ENCODE measurements at regions of chr3 and their contacts with region 1.

Region 1: DNA sequence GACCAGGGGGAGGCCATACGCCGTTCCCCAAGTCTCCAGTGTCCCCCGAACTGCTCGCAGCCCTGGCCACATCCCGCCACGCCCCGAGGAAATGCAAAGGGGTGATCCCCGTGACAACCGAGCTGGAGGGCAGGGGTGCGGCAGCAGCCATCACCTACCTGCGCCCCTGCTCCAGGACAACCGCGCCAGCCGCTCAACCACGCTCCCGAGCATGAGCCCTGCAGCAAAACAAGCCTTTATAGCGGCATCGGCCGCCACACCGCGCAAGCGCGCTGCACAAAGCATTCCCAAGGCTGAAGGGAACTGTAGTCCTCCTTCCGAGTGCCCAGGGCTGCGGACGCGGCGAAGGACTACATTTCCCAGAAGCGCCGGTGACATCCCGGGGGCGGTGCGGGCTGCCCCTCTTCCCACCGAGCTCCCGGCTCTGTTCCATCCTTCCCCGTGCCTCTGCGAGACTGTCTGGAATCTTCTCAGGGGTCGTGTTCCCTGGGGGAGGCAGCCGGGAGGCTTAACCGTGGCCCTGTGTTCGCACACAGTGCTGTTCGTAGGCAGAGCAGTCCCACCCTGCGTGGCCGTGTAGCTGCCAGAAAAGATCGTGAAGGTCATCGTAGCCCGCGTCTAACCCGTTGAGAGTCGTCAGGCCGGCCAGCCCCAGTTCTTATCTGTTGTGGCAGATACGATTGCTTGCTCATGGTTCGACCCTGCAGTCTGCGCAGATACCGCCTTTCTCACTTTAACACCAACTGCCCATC is at the start of gene ABCC5:
- DNase-seq: peak; percentile 89
- ATAC-seq: peak; percentile 97
- H3K4me3 Mint-ChIP-seq: peak within 1 kb of the TSS; percentile 94
- H3K27ac Mint-ChIP-seq: peak within 1 kb of the TSS; percentile 82
- H3K4me1 Mint-ChIP-seq: peaks cover 22% of the 10 kb centered on the region
- H3K27me3 Mint-ChIP-seq: peaks cover 10% of the 10 kb centered on the region
- CTCF ChIP-seq: peak; percentile 85
- total RNA-seq, gene ABCC5: 16.2 to 17.7 TPM

Region 2: DNA sequence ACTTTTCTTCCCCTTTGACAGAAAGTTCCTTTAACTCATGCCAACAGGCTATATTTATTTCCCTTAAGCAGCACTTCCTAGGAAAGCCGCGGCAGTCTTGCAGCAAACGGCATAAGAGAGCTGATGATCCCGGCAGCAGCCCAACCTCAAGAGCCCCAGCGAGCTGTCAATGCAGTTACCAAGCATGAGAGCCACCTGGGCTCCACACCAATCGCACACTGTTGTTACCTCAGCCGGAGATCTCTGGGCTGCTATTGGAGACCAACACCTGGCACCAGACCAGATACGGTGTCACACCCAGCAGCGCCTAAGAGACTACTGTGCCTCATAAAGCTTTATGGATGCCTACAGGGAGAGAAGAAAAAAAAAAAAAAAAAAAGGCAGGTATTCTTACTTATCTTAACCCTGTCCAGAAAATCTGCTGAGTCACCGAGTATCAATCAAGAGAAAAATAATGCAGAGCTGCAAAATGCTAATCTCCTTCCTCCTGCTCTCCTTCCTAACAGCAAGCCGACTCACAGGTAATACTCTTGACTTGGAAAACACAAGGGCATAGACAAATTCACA is 11.8 kb before region 1 on chr3:
- CTCF ChIA-PET with region 1: interaction called, 14 read pairs
- POLR2A ChIA-PET with region 1: no interaction called
- intact Hi-C with region 1: no loop called
- DNase-seq: peak; percentile 37
- ATAC-seq: peak; percentile 74
- H3K4me3 Mint-ChIP-seq: no peak overlapping the region
- H3K27ac Mint-ChIP-seq: no peak overlapping the region
- H3K4me1 Mint-ChIP-seq: peaks cover 11% of the 10 kb centered on the region
- H3K27me3 Mint-ChIP-seq: no peaks in the 10 kb centered on the region
- CTCF ChIP-seq: no peak